Gastrocnemius medialis (tissue), 4 donors: ENCODE measurements at regions of chrX and their contacts with region 1.

Region 1: DNA sequence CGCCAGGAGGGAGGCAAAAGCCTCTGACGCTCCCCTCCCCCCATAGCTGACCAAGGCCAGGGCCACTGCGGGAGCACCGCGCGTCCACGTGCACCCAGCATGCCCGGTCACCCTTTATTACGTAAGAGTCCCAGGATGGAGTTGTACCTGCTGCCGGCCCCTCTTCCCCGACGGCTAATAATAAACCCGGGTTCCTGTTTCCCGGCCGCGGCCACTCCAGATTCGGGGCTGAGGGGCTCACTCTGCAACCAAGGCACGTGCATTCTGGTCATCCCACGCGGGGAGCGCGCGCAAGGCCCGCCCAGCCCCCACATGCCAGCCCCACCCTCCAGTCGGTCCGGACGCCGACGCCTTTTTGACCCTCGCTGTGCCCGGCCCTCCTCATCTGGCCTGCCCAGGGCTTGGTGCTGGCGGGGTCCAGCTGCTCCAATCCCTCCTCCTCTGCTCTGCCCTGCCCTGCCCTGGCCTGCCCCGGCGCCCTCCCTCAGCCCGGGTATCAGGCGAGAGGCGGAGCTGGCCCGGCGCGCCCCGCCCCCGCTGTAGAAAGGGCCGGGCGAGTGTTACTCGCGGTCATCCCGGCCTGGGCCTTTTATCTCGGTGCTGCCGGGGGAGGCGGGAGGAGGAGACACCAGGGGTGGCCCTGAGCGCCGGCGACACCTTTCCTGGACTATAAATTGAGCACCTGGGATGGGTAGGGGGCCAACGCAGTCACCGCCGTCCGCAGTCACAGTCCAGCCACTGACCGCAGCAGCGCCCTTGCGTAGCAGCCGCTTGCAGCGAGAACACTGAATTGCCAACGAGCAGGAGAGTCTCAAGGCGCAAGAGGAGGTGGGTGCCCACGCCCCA is 2.5 kb downstream of the MID1IP1 start:
- DNase-seq: peak; percentile 83 to 91
- ATAC-seq: peak; percentile 44 to 51
- H3K4me3 ChIP-seq: peak overlapping the region; percentile 51 to 76 (median 74)
- H3K27ac ChIP-seq: peak overlapping the region; percentile 91 to 96 (median 94)
- H3K4me1 ChIP-seq: peaks cover 4 to 16% of the 10 kb centered on the region in 2 donors
- H3K27me3 ChIP-seq: no peaks in the 10 kb centered on the region
- CTCF ChIP-seq: peak in 1 of 5 experiments; percentile 8
- POLR2A ChIP-seq: peak; percentile 84 to 92

Region 2: GRCh38 chrX:38859602-38860001 is 55.8 kb after region 1 on chrX:
- in situ Hi-C with region 1: no loop called
- intact Hi-C with region 1: loop called (anchors 5 kb)
- DNase-seq: no peak
- ATAC-seq: no peak
- H3K4me3 ChIP-seq: no peak overlapping the region
- H3K27ac ChIP-seq: no peak overlapping the region
- H3K4me1 ChIP-seq: peaks cover 11% of the 10 kb centered on the region in 2 donors
- H3K27me3 ChIP-seq: no peaks in the 10 kb centered on the region
- CTCF ChIP-seq: no peak
- POLR2A ChIP-seq: no peak

Region 3: DNA sequence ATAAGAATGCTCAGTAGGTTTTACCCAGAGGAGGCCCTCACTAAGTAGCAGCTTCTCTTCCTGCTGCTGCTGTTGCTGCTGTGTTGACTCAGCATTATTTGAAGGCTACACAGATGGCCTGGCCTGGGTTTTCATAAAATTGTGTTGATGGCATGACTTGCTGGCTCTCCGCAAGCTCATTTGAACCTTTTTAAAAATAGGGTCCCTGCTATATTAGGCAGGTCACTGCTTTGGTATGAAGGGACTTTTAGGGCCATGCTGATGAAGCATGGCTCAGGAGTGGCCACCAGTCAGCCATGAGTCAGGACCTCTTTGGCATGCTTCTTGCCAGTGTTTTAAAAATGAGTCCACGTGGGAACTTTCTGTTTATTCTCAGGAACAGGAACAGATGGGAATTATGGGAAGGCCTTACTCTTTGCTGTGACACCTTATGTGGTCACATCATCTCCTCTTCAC is 126.2 kb after region 1 on chrX:
- in situ Hi-C with region 1: loop called in 1 of 4 experiments (anchors 10 kb)
- intact Hi-C with region 1: no loop called
- DNase-seq: peak; percentile 43 to 54
- ATAC-seq: peak; percentile 88 to 96
- H3K4me3 ChIP-seq: no peak overlapping the region
- H3K27ac ChIP-seq: peak overlapping the region; percentile 68 to 83 (median 72)
- H3K4me1 ChIP-seq: peaks cover 5 to 11% of the 10 kb centered on the region in 2 donors
- H3K27me3 ChIP-seq: no peaks in the 10 kb centered on the region
- CTCF ChIP-seq: no peak
- POLR2A ChIP-seq: no peak

Region 4: DNA sequence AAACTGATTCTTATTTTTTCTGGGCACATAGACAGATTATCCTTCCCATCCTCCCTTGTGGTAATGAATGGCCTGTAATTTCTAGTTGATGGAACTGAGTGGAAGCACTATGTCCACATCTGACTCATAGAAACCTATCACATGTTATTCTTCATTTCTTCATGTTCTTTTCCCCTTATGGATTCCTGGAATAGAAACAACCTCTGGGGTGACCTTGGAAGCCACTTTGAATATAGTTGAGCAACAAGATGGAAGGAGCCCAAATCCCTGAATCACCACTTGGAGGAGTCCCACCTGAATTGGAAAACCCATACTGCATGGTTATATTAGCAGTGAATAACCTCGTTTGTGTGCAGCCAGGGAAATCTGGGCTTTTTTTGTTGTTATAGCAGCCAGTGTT is 135.3 kb after region 1 on chrX:
- in situ Hi-C with region 1: loop called in 1 of 4 experiments (anchors 10 kb)
- intact Hi-C with region 1: loop called (anchors 2 kb)
- DNase-seq: peak; percentile 16 to 41
- ATAC-seq: peak; percentile 67 to 68
- H3K4me3 ChIP-seq: no peak overlapping the region
- H3K27ac ChIP-seq: peak overlapping the region; percentile 63 to 87 (median 80)
- H3K4me1 ChIP-seq: peaks cover 3 to 48% of the 10 kb centered on the region in 2 donors
- H3K27me3 ChIP-seq: no peaks in the 10 kb centered on the region
- CTCF ChIP-seq: no peak
- POLR2A ChIP-seq: peak in 1 of 2 donors; percentile 28

Region 5: GRCh38 chrX:38985375-38985774 is 181.6 kb after region 1 on chrX:
- in situ Hi-C with region 1: loop called in 1 of 4 experiments (anchors 25 kb)
- intact Hi-C with region 1: loop called (anchors 5 kb)
- DNase-seq: no peak
- ATAC-seq: peak in 1 of 2 donors; percentile 53
- H3K4me3 ChIP-seq: no peak overlapping the region
- H3K27ac ChIP-seq: no peak overlapping the region
- H3K4me1 ChIP-seq: no peaks in the 10 kb centered on the region
- H3K27me3 ChIP-seq: no peaks in the 10 kb centered on the region
- CTCF ChIP-seq: peak in 2 of 5 experiments; percentile 11 to 19
- POLR2A ChIP-seq: no peak

Region 6: GRCh38 chrX:39065051-39065871 is 261.5 kb after region 1 on chrX:
- in situ Hi-C with region 1: no loop called
- intact Hi-C with region 1: loop called (anchors 2 kb)
- DNase-seq: peak; percentile 46 to 52
- ATAC-seq: peak; percentile 78 to 80
- H3K4me3 ChIP-seq: no peak overlapping the region
- H3K27ac ChIP-seq: peak overlapping the region; percentile 27 to 83 (median 70)
- H3K4me1 ChIP-seq: peaks cover 0 to 15% of the 10 kb centered on the region in 2 donors
- H3K27me3 ChIP-seq: no peaks in the 10 kb centered on the region
- CTCF ChIP-seq: no peak
- POLR2A ChIP-seq: no peak

Region 7: GRCh38 chrX:40169193-40170101 is 1365.6 kb after region 1 on chrX:
- in situ Hi-C with region 1: no loop called
- intact Hi-C with region 1: loop called (anchors 10 kb)
- DNase-seq: no peak
- ATAC-seq: no peak
- H3K4me3 ChIP-seq: peak overlapping the region in 1 of 4 donors; percentile 2
- H3K27ac ChIP-seq: no peak overlapping the region
- H3K4me1 ChIP-seq: peaks cover 2 to 19% of the 10 kb centered on the region in 2 donors
- H3K27me3 ChIP-seq: peaks cover 0 to 55% (median 29%) of the 10 kb centered on the region in 3 donors
- CTCF ChIP-seq: peak in 1 of 5 experiments; percentile 31
- POLR2A ChIP-seq: no peak